Activated T-helper 1 cell treated with anti-CD3 and anti-CD28 coated beads, Interleukin-12 subunit alpha, Interleukin-12 subunit beta, Interleukin-2, Interleukin-4 antibody, amounts not matched to agents 30 ng/mL and 10 ng/mL and 1 ng/mL, durations not matched to agents 14 hours and 24 hours and 36 hours (primary cell): ENCODE measurements at regions of chr9 and their contacts with region 1.

Region 1: GRCh38 chr9:91422758-91423711 is 597 bp downstream of the NFIL3 start:
- DNase-seq: peak; percentile 51
- H3K4me3 Mint-ChIP-seq: peak overlapping the region; percentile 98
- H3K27ac Mint-ChIP-seq: peak overlapping the region; percentile 96
- H3K4me1 Mint-ChIP-seq: peaks cover 63% of the 10 kb centered on the region
- H3K27me3 Mint-ChIP-seq: peaks cover 1% of the 10 kb centered on the region

Region 2: GRCh38 chr9:90964101-90965020 is 458.7 kb before region 1 on chr9:
- intact Hi-C with region 1: loop called (anchors 5 kb)
- DNase-seq: no peak
- H3K4me3 Mint-ChIP-seq: no peak overlapping the region
- H3K27ac Mint-ChIP-seq: no peak overlapping the region
- H3K4me1 Mint-ChIP-seq: peaks cover 46% of the 10 kb centered on the region
- H3K27me3 Mint-ChIP-seq: peaks cover 9% of the 10 kb centered on the region

Region 3: DNA sequence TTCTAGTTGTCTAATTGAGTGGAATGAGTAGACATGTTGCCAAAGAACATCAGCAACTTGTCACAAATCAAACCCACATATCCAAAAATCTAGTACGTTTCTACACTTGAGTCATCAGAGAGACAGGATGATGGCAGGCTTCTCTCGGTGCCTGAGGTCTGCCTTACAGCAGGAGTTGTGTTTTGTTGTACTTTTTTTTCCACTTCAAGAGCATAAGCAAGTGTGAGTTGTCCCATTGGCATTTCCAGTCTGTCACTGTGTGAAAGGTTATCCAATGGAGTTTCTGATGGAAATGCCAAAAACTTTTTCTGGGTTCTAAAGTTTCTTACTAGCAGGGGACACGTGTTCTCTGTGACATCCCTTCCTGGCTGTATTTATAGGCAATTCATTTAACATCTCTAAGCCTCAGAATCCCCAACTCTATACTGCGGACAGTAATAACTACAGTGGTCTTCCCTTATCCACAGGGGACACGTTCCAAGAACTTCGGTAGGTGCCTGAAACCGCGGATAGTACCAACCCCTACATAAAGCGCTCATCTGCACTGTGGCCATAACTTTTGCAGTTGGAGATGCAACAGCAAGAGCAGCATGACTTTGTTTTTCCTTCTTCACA is 374.9 kb before region 1 on chr9:
- intact Hi-C with region 1: loop called (anchors 1 kb)
- DNase-seq: peak; percentile 31
- H3K4me3 Mint-ChIP-seq: peak overlapping the region; percentile 65
- H3K27ac Mint-ChIP-seq: peak overlapping the region; percentile 92
- H3K4me1 Mint-ChIP-seq: peaks cover 67% of the 10 kb centered on the region
- H3K27me3 Mint-ChIP-seq: peaks cover 4% of the 10 kb centered on the region

Region 4: GRCh38 chr9:91207729-91208418 is 215.2 kb before region 1 on chr9:
- intact Hi-C with region 1: loop called (anchors 2 kb)
- DNase-seq: no peak
- H3K4me3 Mint-ChIP-seq: peak overlapping the region; percentile 68
- H3K27ac Mint-ChIP-seq: peak overlapping the region; percentile 95
- H3K4me1 Mint-ChIP-seq: peaks cover 59% of the 10 kb centered on the region
- H3K27me3 Mint-ChIP-seq: no peaks in the 10 kb centered on the region

Region 5: GRCh38 chr9:91220021-91220420 is 203.0 kb before region 1 on chr9:
- intact Hi-C with region 1: no loop called
- DNase-seq: no peak
- H3K4me3 Mint-ChIP-seq: no peak overlapping the region
- H3K27ac Mint-ChIP-seq: no peak overlapping the region
- H3K4me1 Mint-ChIP-seq: peaks cover 14% of the 10 kb centered on the region
- H3K27me3 Mint-ChIP-seq: no peaks in the 10 kb centered on the region

Region 6: DNA sequence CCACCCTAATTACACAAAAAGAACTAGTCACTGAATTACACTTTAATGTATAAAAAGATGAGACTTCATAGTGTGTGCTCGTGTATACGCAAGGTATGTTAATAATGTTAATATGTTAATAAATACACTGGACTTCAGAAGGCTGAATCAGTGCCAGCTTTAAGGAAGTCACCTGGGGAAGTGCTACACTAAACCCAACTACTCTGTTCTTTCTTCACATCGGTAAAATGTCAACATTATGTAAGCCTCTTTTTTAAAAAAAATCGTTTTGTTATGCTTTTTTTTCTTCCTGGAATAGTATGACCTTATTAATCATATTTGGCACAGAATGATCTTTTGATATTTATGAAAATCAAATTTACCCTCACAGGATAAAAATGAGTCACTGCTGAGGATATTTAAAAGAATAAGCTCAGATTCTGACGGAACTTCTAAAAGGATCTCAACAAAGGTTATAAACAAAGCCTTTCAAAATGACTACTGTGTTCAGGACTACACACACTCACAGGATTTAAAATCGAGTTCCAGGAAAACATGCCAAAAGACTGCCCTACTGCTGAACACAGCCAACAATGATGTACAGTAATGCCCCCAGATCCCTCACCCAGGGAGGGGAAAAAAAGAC is 137.2 kb before region 1 on chr9:
- intact Hi-C with region 1: no loop called
- DNase-seq: no peak
- H3K4me3 Mint-ChIP-seq: no peak overlapping the region
- H3K27ac Mint-ChIP-seq: no peak overlapping the region
- H3K4me1 Mint-ChIP-seq: peaks cover 25% of the 10 kb centered on the region
- H3K27me3 Mint-ChIP-seq: no peaks in the 10 kb centered on the region

Region 7: DNA sequence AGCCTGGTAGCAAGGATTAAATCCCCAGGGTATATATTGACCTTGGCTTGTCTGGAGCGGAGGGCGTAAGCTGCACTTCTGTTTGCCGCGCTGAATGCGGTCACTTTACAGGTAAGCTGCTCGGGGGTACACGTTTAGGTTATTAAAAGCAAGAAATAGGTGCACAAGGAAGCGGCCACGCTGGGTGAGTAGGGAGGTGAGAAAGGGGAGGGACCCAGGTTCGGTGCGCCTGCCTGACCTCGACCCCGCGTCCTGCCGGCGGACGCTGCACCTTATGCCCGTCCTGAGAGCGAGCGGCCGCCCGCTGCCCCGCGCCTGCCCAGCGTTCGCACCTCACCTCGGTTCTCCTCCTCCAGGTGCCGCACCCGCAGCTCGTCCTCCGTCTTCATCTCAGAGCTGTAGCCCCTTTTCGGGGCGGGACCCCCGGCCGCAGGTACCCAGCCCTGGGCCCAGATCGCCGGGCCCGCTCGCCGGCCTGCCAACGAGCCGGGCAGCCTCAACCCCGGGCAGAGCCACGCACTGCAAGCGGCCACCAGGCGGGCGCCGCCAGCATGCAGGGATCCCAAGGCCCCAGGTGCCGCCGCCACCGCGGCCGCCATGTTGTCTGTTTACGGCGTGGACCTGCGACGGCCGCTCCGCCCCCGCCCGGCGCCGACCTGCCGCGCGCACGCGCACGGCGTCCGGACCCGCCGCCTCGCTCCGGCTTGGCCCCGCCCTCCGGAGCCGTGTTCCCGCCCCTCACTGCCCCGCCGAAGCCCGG is 61.6 kb before region 1 on chr9 and contains the start of gene AUH:
- intact Hi-C with region 1: loop called (anchors 1 kb)
- DNase-seq: peak; percentile 85
- H3K4me3 Mint-ChIP-seq: peak within 1 kb of the TSS; percentile 97
- H3K27ac Mint-ChIP-seq: peak within 1 kb of the TSS; percentile 94
- H3K4me1 Mint-ChIP-seq: peaks cover 48% of the 10 kb centered on the region
- H3K27me3 Mint-ChIP-seq: no peaks in the 10 kb centered on the region
- total RNA-seq, gene AUH: 50.4 and 53.3 TPM in 2 replicates

Region 8: DNA sequence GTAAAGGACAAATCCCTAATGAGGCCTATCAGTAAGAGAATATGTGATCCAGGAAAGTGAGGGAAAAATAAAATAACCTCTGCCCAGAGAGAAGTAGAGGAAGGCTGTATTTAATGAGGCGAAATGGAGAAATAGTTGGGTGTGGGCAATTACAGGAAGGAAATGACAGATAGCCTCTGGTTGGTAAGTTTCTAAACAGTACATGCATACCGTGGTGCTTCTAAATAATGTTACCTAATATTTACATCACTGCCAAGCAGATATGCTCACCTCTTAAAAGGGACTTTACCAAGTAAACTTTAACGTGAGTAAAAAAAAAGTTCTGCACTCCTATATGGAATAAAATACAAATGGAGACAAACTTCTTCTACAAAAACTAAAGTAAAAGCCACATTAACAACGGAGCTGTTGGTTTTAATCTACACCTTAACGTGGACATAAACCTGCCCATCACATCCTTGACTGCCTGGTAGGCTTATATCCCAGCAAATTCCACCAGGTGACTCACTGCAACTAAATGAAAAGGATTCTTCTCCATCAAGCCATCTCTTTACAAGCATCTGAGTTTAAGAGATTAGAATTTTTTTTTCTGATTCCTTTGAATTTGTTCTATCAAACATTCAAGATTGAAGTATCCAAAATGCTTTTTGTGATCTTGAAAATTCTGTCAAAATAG is 11.8 kb before region 1 on chr9:
- intact Hi-C with region 1: no loop called
- DNase-seq: no peak
- H3K4me3 Mint-ChIP-seq: no peak overlapping the region
- H3K27ac Mint-ChIP-seq: no peak overlapping the region
- H3K4me1 Mint-ChIP-seq: peaks cover 61% of the 10 kb centered on the region
- H3K27me3 Mint-ChIP-seq: no peaks in the 10 kb centered on the region

Region 9: GRCh38 chr9:91451519-91452270 is 28.7 kb after region 1 on chr9:
- intact Hi-C with region 1: no loop called
- DNase-seq: no peak
- H3K4me3 Mint-ChIP-seq: no peak overlapping the region
- H3K27ac Mint-ChIP-seq: no peak overlapping the region
- H3K4me1 Mint-ChIP-seq: no peaks in the 10 kb centered on the region
- H3K27me3 Mint-ChIP-seq: peaks cover 27% of the 10 kb centered on the region

Region 10: DNA sequence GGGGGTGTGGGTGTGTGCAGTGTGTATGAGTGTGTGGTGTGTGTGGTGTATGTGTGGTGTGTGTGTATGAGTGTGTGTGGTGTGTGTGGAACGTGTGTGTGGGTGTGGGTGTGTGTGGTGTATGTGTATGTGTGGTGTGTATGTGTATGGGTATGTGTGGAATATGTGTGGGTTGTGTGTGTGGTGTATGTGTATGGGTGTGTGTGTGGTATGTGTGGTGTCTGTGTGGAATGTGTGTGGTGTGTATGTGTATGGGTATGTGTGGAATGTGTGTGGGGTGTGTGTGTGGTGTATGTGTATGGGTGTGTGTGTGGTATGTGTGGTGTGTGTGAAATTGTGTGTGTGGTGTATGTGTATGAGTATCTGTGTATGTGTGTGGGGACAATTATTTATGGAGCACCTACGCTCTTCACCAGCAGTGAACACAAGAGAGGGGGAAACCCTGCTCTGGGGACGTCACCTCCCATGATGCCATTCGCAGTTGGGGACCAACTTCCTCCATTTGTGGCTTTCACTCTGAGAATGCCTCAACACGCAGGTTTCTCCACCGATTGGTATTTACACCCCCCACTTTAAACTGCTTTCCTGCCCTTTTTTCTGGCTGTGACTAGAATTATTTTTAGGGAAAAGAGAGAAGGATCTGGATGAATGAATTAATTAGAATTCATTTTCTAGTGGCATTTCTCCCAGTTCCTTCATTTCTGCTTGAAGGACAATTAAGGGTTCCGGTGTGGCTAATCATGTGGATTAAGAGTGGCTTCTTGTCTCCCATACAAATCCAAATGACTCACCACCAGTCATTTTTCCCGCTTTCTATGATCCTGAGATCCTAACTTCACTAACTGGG is 288.9 kb after region 1 on chr9:
- intact Hi-C with region 1: loop called (anchors 1 kb)
- DNase-seq: peak; percentile 67
- H3K4me3 Mint-ChIP-seq: no peak overlapping the region
- H3K27ac Mint-ChIP-seq: no peak overlapping the region
- H3K4me1 Mint-ChIP-seq: no peaks in the 10 kb centered on the region
- H3K27me3 Mint-ChIP-seq: peaks cover 9% of the 10 kb centered on the region